Activated T-helper 2 cell treated with anti-CD3 and anti-CD28 coated beads, Interferon-gamma antibody, Interleukin-2, Interleukin-4, amounts not matched to agents 10 μg/mL and 5 μg/mL and 100 μg/mL, durations not matched to agents 14 hours and 24 hours and 36 hours (primary cell): ENCODE measurements at regions of chr17 and their contacts with region 1.

Region 1: DNA sequence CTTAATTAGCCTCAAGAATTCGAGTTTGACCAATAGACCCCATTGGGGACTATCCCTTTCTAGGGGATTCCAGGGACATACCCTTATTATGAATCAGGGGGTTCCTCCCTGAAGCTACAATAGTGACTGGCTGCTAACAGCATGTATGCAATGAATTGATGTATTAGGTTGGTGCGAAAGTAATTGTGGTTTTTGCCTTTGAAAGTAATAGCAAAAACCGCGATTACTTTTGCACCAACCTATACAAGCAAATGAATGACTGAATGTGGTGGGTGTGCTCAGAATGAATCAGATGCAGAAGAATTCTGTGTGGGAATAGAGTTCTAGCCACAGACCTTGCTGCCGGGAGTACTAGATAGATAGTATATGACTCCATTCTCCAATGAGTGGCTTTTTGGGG is 76.7 kb downstream of the HLF start:
- DNase-seq: no peak
- H3K4me3 Mint-ChIP-seq: no peak overlapping the region
- H3K27ac Mint-ChIP-seq: peak overlapping the region; percentile 8
- H3K4me1 Mint-ChIP-seq: peaks cover 60% of the 10 kb centered on the region
- H3K27me3 Mint-ChIP-seq: peaks cover 12% of the 10 kb centered on the region

Region 2: GRCh38 chr17:55210292-55210691 is 131.1 kb before region 1 on chr17:
- intact Hi-C with region 1: no loop called
- DNase-seq: no peak
- H3K4me3 Mint-ChIP-seq: no peak overlapping the region
- H3K27ac Mint-ChIP-seq: no peak overlapping the region
- H3K4me1 Mint-ChIP-seq: no peaks in the 10 kb centered on the region
- H3K27me3 Mint-ChIP-seq: peaks cover 2% of the 10 kb centered on the region

Region 3: DNA sequence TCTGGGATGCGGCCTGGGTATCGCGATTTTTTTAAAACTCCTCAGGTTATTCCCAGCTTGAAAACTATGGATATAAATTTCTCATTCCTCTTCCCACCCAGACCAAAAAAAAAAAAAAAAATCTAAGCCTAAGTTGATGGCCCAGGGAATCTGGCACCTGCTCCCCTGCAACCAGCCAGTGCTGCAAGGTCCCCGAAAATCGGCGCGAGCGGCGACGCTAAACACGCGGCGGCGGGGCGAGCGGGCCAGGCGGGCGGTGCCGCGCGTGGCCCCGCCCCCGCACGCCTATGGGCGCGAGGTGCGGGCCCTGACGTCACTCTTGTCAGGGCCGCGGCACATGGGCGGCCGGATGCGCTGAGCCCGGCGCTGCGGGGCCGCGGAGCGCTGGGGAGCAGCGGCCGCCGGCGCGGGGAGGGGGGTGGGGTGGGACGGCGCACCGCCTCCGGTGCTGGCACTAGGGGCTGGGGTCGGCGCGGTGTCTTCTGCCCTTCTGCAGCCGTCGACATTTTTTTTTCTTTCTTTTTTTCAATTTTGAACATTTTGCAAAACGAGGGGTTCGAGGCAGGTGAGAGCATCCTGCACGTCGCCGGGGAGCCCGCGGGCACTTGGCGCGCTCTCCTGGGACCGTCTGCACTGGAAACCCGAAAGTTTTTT is 76.7 kb before region 1 on chr17 and contains the start of gene HLF:
- intact Hi-C with region 1: loop called (anchors 2 kb)
- DNase-seq: peak; percentile 70
- H3K4me3 Mint-ChIP-seq: peak within 1 kb of the TSS; percentile 64
- H3K27ac Mint-ChIP-seq: peak within 1 kb of the TSS; percentile 29
- H3K4me1 Mint-ChIP-seq: peaks cover 13% of the 10 kb centered on the region
- H3K27me3 Mint-ChIP-seq: peaks cover 84% of the 10 kb centered on the region
- total RNA-seq, gene HLF: 4.5 and 5.1 TPM in 2 replicates

Region 4: DNA sequence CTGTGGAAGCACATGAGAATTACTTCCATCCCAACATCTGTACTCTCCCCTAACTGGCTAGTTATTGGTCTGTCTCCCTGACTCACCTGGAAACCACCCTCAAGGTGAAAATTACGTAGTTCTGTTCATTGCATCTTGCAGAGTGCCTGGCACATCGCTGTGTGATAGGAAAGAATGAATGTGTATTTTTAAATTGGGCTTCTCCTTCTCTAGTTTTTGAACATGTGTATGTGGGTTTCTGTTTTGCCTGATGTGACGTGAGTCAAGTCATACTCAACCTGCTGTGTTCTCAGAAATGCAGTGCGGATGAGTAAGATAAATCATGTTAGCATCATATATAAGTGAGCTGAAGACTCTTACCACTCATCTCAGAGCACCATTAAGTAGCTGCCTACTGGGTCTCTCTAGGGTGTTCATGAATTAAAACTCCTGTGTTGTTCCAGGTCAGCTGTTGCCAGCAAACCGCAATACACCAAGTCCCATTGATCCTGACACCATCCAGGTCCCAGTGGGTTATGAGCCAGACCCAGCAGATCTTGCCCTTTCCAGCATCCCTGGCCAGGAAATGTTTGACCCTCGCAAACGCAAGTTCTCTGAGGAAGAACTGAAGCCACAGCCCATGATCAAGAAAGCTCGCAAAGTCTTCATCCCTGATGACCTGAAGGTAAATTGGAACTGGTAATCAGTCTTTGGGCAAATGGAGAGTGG is 26.5 kb before region 1 on chr17:
- intact Hi-C with region 1: loop called (anchors 1 kb)
- DNase-seq: peak; percentile 25
- H3K4me3 Mint-ChIP-seq: peak overlapping the region; percentile 51
- H3K27ac Mint-ChIP-seq: peak overlapping the region; percentile 84
- H3K4me1 Mint-ChIP-seq: peaks cover 30% of the 10 kb centered on the region
- H3K27me3 Mint-ChIP-seq: no peaks in the 10 kb centered on the region

Region 5: DNA sequence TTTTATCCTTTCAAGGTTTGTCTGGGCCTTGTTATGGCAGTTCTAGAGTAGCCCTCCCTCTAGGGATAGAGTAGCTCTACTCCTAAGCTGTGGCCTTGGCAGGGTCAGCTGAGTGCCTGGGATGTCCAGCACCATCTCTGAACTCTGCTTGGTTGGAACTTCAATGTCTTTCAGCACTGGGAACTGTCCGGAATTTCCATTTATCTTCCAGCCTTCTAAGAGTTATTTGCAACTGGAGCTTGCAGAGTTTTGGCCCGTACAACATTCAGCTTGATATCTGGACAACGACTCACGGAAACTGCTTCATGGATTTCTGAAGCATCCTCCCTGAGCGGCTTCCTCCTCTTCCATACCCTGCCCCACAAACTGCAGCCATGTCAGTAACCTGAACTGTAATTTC is 57.3 kb after region 1 on chr17:
- intact Hi-C with region 1: no loop called
- DNase-seq: no peak
- H3K4me3 Mint-ChIP-seq: no peak overlapping the region
- H3K27ac Mint-ChIP-seq: no peak overlapping the region
- H3K4me1 Mint-ChIP-seq: no peaks in the 10 kb centered on the region
- H3K27me3 Mint-ChIP-seq: no peaks in the 10 kb centered on the region